ENCODE measurements at regions of chr5 and their contacts with region 1.

Region 1: DNA sequence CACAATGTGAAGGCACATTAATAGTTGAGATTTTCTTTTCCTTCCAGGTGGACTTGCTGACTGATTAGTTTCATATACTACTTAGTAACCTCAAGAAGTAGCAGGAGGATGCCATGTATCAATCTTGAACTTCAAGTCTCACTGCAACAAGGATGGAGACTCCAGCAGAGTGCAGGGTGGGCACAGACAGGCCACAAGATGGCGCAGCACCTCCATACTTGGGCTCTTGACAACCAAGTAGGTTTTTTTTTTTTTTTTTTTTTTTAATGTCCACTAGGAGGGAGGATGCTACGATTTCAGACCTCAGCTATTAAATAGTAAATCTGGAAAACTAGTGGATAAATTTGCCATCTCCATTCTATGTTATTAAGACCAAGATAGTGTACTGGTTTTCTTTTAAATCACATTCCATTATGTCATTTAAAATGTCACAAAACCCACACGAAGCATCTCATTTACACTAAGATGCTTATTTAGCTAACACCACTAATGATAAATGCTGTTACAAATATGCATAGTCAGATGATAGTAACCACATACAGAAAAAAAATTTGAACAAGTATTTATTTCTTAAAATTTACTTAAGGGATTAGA is 58.6 kb downstream of the IL6ST start:
- DNase-seq: peak; percentile 83
- H3K4me3 ChIP-seq: no peak overlapping the region
- H3K27ac ChIP-seq: no peak overlapping the region
- H3K4me1 ChIP-seq: peaks cover 0 to 3% (median 0%) of the 10 kb centered on the region in 4 donors
- H3K27me3 ChIP-seq: no peaks in the 10 kb centered on the region
- CTCF ChIP-seq: peak; percentile 53 to 80 (median 75)
- EP300 ChIP-seq: no peak
- POLR2A ChIP-seq: no peak

Region 2: GRCh38 chr5:55021410-55021809 is 914.8 kb before region 1 on chr5:
- in situ Hi-C with region 1: no loop called
- intact Hi-C with region 1: no loop called
- DNase-seq: no peak
- H3K4me3 ChIP-seq: no peak overlapping the region
- H3K27ac ChIP-seq: no peak overlapping the region
- H3K4me1 ChIP-seq: no peaks in the 10 kb centered on the region
- H3K27me3 ChIP-seq: no peaks in the 10 kb centered on the region
- CTCF ChIP-seq: no peak
- EP300 ChIP-seq: no peak
- POLR2A ChIP-seq: no peak

Region 3: GRCh38 chr5:56175488-56175887 is 239.3 kb after region 1 on chr5:
- in situ Hi-C with region 1: loop called in 1 of 4 experiments (anchors 25 kb)
- intact Hi-C with region 1: no loop called
- DNase-seq: no peak
- H3K4me3 ChIP-seq: no peak overlapping the region
- H3K27ac ChIP-seq: peak overlapping the region; percentile 50 to 65 (median 52)
- H3K4me1 ChIP-seq: peaks cover 0 to 20% (median 0%) of the 10 kb centered on the region in 4 donors
- H3K27me3 ChIP-seq: no peaks in the 10 kb centered on the region
- CTCF ChIP-seq: no peak
- EP300 ChIP-seq: no peak
- POLR2A ChIP-seq: no peak

Region 4: DNA sequence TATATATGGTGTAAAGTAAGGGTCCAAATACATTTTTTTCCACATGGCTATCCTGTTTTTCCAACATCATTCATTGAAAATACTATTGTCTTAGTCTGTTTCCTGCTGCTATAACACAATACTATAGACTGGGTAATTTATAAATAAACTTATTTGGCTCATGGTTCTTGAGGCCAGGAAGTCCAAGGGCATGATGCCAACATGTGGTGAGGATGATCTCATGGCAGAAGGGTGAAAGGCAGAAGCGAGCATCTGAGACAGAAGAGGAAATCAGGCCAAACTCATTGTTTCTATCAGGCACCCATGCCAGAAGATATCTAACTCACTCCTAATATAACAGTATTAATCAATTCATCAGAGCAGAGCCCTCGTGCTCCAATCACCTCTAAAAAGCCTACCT is 254.3 kb after region 1 on chr5:
- in situ Hi-C with region 1: loop called in 2 of 4 experiments (anchors 10 to 25 kb)
- intact Hi-C with region 1: no loop called
- DNase-seq: peak; percentile 33
- H3K4me3 ChIP-seq: no peak overlapping the region
- H3K27ac ChIP-seq: no peak overlapping the region
- H3K4me1 ChIP-seq: no peaks in the 10 kb centered on the region
- H3K27me3 ChIP-seq: no peaks in the 10 kb centered on the region
- CTCF ChIP-seq: no peak
- EP300 ChIP-seq: no peak
- POLR2A ChIP-seq: no peak

Region 5: DNA sequence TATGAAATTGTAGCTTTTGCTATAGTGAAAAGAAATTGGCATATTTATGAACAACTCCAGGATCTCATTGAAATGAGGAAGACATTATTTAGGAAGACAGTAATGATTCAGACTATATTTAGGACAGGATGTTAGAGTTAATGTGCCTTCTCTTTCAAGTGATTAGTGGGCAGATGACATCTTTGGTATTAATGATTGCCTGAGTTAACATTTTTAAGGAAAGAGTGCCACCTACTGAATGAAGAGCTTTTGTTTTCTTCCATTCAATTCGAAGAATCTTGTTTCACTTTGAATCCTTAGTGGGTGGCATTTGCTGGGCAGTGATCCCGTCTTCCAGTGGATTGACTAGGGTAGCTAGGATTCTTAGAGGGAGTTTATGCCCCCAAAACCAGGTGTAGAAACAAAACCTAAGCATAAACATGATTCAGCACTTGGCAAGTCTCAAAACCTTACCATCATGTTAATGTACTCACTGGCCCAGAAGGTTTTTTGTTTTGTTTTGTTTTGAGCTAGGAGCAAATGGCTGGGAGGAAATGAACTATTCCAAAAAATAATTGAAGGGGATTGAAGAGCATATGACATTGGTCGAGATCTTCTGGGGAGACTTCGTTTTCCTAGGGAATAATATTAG is 902.3 kb after region 1 on chr5:
- in situ Hi-C with region 1: loop called in 1 of 4 experiments (anchors 25 kb)
- intact Hi-C with region 1: no loop called
- DNase-seq: no peak
- H3K4me3 ChIP-seq: no peak overlapping the region
- H3K27ac ChIP-seq: peak overlapping the region; percentile 26 to 60 (median 44)
- H3K4me1 ChIP-seq: peaks cover 0 to 36% (median 5%) of the 10 kb centered on the region in 4 donors
- H3K27me3 ChIP-seq: no peaks in the 10 kb centered on the region
- CTCF ChIP-seq: peak; percentile 40 to 56 (median 47)
- EP300 ChIP-seq: no peak
- POLR2A ChIP-seq: no peak

Measured in transverse colon (tissue), 4 donors.